ENCODE measurements at regions of chr12 and their contacts with region 1.

Region 1: GRCh38 chr12:66319266-66319954 is 17.1 kb downstream of the HELB start:
- H3K4me3 Mint-ChIP-seq: no peak overlapping the region
- H3K27ac Mint-ChIP-seq: no peak overlapping the region
- H3K4me1 Mint-ChIP-seq: peaks cover 17% of the 10 kb centered on the region
- H3K27me3 Mint-ChIP-seq: no peaks in the 10 kb centered on the region

Region 2: GRCh38 chr12:65169320-65170208 is 1149.8 kb before region 1 on chr12 and contains the start of gene LEMD3:
- intact Hi-C with region 1: loop called (anchors 10 kb)
- H3K4me3 Mint-ChIP-seq: peak within 1 kb of the TSS; percentile 94
- H3K27ac Mint-ChIP-seq: peak within 1 kb of the TSS; percentile 97
- H3K4me1 Mint-ChIP-seq: peaks cover 23% of the 10 kb centered on the region
- H3K27me3 Mint-ChIP-seq: no peaks in the 10 kb centered on the region

Region 3: DNA sequence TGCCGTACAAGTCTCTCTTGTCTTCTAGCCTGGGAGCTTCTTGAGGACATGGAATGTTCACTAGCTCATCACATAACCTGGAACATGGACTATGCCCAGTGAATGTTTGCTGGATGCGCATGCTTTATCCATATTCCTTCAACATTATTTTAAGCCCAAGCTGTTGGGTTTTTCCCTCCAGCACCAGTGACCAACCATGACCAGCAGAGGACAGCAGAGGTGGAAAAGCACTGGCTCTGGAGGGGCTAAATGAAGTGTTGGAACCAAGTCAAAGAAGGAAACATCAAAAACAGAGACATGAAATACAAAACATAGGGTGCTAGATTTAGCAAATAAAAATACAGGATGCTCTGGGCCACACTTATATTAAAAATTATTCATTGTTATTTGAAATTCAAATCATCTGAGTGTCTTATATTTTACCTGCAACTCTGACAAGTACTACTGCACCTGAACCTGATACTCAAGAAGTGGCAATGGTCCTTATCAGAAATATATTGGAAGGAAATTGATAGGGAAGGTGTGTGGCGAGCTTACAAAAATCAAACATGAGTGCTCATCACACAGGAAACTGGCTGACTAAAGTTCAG is 40.2 kb before region 1 on chr12:
- intact Hi-C with region 1: no loop called
- H3K4me3 Mint-ChIP-seq: no peak overlapping the region
- H3K27ac Mint-ChIP-seq: peak overlapping the region; percentile 58
- H3K4me1 Mint-ChIP-seq: peaks cover 32% of the 10 kb centered on the region
- H3K27me3 Mint-ChIP-seq: no peaks in the 10 kb centered on the region